ENCODE measurements at regions of chr19 and their contacts with region 1.

Region 1: GRCh38 chr19:57103573-57104277 is 16.1 kb upstream of the USP29 start:
- DNase-seq: peak; percentile 47
- ATAC-seq: peak; percentile 89
- H3K4me3 ChIP-seq: peak overlapping the region; percentile 35; the same call in 1 of the 2 replicates
- H3K27ac ChIP-seq: no peak overlapping the region
- H3K4me1 ChIP-seq: peaks cover 1% of the 10 kb centered on the region; the same call in 1 of the 2 replicates
- H3K27me3 ChIP-seq: no peaks in the 10 kb centered on the region
- CTCF ChIP-seq: peak; percentile 78
- POLR2A ChIP-seq: no peak
- RAD21 ChIP-seq: peak; percentile 84

Region 2: DNA sequence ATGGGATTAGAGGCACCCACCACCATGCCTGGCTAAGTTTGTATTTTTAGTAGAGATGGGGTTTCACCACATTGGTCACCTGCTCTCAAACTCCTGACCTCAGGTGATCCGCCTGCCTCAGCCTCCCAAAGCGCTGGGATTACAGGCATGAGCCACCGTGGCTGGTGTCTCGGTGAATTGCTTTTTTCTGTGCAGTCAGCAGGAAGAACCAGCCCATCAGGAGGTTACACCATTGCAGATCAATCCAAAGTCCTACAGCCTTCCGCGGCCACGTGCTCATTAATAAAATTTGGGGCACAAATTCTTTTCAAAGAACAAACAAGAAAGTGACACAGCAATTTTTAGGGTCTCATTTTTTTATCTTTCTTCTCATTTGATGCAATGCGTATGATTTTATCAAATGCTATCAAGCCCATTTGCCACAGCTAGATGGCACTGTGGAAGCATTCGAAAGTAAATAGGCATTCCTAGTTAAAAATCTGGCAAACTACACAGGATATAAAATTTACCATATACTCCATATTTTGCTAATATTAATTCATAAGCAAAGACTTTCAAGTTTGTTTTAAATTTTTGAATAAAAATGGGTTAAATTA is 377.8 kb before region 1 on chr19:
- CTCF ChIA-PET with region 1: no interaction called
- POLR2A ChIA-PET with region 1: no interaction called
- dilution Hi-C with region 1: no loop called
- in situ Hi-C with region 1: no loop called
- intact Hi-C with region 1: loop called (anchors 10 kb)
- DNase-seq: no peak
- ATAC-seq: no peak
- H3K4me3 ChIP-seq: no peak overlapping the region
- H3K27ac ChIP-seq: no peak overlapping the region
- H3K4me1 ChIP-seq: no peaks in the 10 kb centered on the region
- H3K27me3 ChIP-seq: no peaks in the 10 kb centered on the region
- CTCF ChIP-seq: peak; percentile 13; the same call in 1 of the 2 replicates
- POLR2A ChIP-seq: no peak
- RAD21 ChIP-seq: no peak

Region 3: DNA sequence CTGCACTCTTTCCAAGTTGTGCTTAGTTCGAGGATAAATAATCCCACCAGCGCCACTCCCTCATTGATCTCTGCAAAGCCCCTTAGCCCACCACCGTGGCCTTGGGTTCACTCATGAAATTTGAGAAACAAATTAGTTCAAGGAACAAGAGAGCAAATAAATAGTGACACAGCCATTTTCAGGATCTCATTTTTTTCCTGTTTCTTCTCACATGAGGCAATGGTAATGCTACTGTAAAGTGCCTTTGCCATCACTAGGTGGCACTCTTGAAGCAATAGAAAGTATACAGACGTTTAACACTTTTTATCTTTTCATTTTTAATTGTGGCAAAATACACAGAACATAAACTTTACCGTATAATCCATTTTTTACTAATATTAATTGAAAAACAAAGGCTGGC is 355.3 kb before region 1 on chr19:
- CTCF ChIA-PET with region 1: no interaction called
- POLR2A ChIA-PET with region 1: no interaction called
- dilution Hi-C with region 1: no loop called
- in situ Hi-C with region 1: no loop called
- intact Hi-C with region 1: loop called (anchors 2 kb)
- DNase-seq: no peak
- ATAC-seq: no peak
- H3K4me3 ChIP-seq: no peak overlapping the region
- H3K27ac ChIP-seq: no peak overlapping the region
- H3K4me1 ChIP-seq: no peaks in the 10 kb centered on the region
- H3K27me3 ChIP-seq: no peaks in the 10 kb centered on the region
- CTCF ChIP-seq: no peak
- POLR2A ChIP-seq: no peak
- RAD21 ChIP-seq: no peak

Region 4: DNA sequence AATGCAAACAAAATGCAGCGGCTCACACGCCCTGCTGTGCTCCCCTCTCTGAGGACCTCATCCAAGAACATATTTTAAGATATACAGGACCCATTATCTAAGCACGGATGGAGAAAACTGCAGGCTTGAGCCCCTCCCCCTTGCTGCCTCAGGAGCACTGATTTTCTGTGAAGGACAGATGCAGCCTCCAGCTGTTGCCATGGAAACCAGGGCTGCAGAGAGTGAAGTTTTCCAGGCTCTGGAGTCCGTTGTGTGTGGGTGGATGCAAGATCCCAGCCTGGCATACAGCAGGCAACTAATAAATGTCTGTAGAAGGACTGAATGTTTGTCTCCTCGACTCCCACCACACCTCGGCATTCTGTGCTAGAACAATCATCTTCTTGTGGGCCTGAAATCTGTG is 157.6 kb before region 1 on chr19:
- CTCF ChIA-PET with region 1: no interaction called
- POLR2A ChIA-PET with region 1: no interaction called
- dilution Hi-C with region 1: no loop called
- in situ Hi-C with region 1: no loop called
- intact Hi-C with region 1: no loop called
- DNase-seq: no peak
- ATAC-seq: no peak
- H3K4me3 ChIP-seq: no peak overlapping the region
- H3K27ac ChIP-seq: no peak overlapping the region
- H3K4me1 ChIP-seq: no peaks in the 10 kb centered on the region
- H3K27me3 ChIP-seq: no peaks in the 10 kb centered on the region
- CTCF ChIP-seq: no peak
- POLR2A ChIP-seq: no peak
- RAD21 ChIP-seq: no peak

Region 5: GRCh38 chr19:57279418-57280066 is 175.8 kb after region 1 on chr19:
- CTCF ChIA-PET with region 1: no interaction called
- POLR2A ChIA-PET with region 1: no interaction called
- dilution Hi-C with region 1: no loop called
- in situ Hi-C with region 1: no loop called
- intact Hi-C with region 1: loop called (anchors 10 kb)
- DNase-seq: peak; percentile 97
- ATAC-seq: peak; percentile 89
- H3K4me3 ChIP-seq: peak overlapping the region; percentile 57
- H3K27ac ChIP-seq: peak overlapping the region; percentile 93
- H3K4me1 ChIP-seq: peaks cover 5% of the 10 kb centered on the region
- H3K27me3 ChIP-seq: no peaks in the 10 kb centered on the region
- CTCF ChIP-seq: peak; percentile 41
- POLR2A ChIP-seq: peak; percentile 96
- RAD21 ChIP-seq: no peak

Measured in IMR-90 (cell line).